Aorta (tissue), 5 donors: ENCODE measurements at regions of chr20 and their contacts with region 1.

Region 1: DNA sequence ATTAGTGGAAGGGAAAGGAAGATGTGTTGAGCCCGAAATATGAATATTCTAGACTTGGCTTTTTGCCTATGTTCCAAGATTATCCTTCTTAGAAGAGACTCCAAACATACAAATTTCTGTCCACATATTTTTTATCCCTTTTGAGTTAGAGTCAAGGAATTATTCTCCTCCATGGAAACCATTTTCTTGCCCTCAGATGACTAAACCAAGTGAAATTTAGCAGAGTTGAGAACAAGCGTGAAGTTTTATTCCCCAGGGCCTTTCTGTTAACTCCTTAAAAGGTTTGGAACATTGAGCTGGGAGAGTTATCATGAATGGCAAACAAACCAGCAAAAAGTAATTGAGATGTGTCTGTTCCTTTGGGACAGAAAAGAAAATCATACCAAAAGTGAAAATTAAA is 286.1 kb upstream of the PLCB4 start:
- DNase-seq: no peak
- ATAC-seq: no peak
- H3K4me3 ChIP-seq: no peak overlapping the region
- H3K27ac ChIP-seq: no peak overlapping the region
- H3K4me1 ChIP-seq: peaks cover 0 to 4% of the 10 kb centered on the region in 2 donors
- H3K27me3 ChIP-seq: no peaks in the 10 kb centered on the region

Region 2: GRCh38 chr20:8722276-8722928 is 60.4 kb before region 1 on chr20:
- intact Hi-C with region 1: no loop called
- DNase-seq: no peak
- ATAC-seq: no peak
- H3K4me3 ChIP-seq: no peak overlapping the region
- H3K27ac ChIP-seq: no peak overlapping the region
- H3K4me1 ChIP-seq: no peaks in the 10 kb centered on the region
- H3K27me3 ChIP-seq: no peaks in the 10 kb centered on the region

Region 3: GRCh38 chr20:8901237-8902025 is 118.6 kb after region 1 on chr20:
- intact Hi-C with region 1: no loop called
- DNase-seq: peak; percentile 55 to 86
- ATAC-seq: peak; percentile 87
- H3K4me3 ChIP-seq: no peak overlapping the region
- H3K27ac ChIP-seq: peak overlapping the region; percentile 87 to 93
- H3K4me1 ChIP-seq: peaks cover 2 to 6% of the 10 kb centered on the region in 2 donors
- H3K27me3 ChIP-seq: no peaks in the 10 kb centered on the region

Region 4: DNA sequence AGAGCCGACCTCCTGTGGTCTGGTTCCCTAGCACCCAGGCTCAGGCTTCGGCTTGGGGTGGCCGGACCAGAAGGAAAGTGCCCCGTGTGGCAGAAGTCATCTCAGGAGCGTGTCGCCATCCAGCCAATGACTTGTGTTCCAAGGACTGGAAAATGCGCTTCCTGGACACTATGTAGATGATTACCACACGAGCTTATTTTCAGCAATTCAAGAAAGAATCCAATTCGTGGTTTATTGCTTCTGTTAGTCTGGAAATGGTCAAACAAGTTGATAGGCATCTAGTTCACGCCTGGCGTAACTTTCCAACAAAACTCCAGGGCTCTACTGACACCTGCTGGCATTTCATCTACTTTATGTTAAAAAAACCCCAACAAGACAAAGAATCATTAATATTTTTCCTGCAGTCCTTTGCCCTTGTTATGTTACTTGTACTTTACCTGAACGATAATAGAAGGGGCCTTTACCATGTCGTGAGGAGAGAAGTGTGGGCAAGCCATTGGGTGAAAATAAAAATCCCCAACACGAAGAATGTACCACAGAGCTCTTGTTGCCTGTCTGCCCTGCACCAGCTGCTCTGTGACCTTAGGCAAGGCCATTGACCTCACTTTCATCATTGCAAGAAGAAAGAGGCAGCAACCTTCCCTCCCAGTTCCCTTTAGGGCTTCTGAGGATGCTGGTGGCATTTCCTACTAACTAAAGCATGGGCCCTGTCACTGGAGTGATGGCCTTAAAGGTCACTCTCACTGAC is 576.9 kb after region 1 on chr20:
- intact Hi-C with region 1: loop called in 1 of 2 experiments (anchors 10 kb)
- DNase-seq: peak; percentile 51 to 72
- ATAC-seq: peak; percentile 80
- H3K4me3 ChIP-seq: no peak overlapping the region
- H3K27ac ChIP-seq: peak overlapping the region in 1 of 2 donors; percentile 58
- H3K4me1 ChIP-seq: peaks cover 0 to 2% of the 10 kb centered on the region in 2 donors
- H3K27me3 ChIP-seq: no peaks in the 10 kb centered on the region

Region 5: DNA sequence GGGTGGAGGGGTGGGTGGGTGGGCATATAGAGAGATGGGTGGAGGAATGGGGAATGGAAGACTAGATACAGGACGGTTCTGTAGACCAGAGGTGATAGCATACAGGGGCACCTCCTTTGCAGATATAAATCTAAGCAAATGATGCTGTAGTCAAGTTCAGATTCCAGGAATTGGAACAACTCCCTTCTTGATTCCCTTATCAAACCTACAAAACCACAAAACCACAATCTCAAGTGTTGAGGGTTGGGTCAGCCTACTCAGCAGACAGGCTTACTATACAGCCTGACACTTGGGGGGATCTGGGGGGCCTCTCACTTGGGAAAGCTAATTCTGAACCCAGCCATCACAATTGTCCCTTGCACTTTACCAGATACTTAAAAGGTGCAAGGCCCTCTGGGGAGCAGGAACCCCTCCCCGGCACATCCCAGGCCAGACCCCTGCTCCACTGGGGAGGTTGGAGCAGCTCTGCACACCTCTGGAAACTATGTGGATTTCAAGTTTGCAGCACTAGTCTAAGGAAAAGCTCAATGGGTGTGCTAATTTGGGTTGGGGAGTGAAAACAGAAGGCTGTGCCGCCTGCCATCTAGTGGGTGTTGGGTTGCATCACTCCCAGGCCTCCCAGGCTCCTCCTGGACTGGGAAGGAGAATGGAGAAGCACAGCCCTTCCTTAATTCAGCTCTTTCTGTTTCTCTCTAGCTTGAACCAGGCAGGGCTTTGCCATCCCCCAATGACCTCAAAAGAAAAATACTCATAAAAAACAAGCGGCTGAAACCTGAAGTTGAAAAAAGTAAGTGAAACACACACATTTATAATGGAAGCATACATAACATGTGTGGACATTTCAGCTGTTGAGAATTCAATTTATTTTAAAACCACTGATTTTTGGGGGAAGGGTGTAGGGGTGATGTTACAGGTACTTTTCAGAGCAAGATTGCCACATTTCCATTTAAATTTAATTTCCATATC is 610.4 kb after region 1 on chr20:
- intact Hi-C with region 1: loop called in 1 of 2 experiments (anchors 5 kb)
- DNase-seq: peak; percentile 81 to 86
- ATAC-seq: peak; percentile 92
- H3K4me3 ChIP-seq: no peak overlapping the region
- H3K27ac ChIP-seq: no peak overlapping the region
- H3K4me1 ChIP-seq: peaks cover 3 to 7% of the 10 kb centered on the region in 2 donors
- H3K27me3 ChIP-seq: no peaks in the 10 kb centered on the region

Region 6: DNA sequence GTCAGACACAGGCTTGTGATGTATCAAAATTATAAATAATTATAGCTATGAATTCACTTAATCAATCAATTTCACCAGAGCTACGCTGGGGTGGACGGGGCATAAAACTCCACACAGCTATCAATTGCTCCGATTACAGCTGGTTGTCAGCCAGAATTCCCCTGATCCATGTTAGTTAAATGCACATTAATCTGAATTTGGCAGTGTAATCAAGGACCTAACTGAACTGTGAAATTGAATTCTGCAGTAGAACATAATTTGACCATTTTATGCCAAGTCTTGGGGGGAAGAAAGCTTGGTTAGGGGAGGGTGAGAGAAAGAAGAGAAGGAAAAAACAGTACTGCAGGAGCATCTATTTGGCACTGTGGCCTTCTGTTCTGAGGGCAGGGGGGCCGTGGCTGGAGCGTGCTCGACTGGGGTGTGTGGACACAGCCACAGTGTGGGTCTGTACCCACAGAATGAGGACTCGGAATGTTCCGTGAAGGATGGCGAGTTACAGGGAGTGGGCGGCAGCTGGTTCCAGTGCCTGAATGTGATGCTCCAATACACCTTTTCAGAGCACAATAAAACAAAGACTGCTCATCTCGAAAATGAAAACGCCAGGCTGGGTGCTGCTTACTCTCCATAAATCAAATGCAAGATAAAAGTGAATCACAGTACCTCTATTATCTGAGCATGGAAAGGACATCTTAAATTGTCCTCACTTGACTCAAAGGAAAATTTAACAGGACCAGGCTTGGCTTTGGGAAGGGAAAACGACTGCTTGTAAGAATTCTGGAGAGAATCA is 790.7 kb after region 1 on chr20:
- intact Hi-C with region 1: no loop called
- DNase-seq: no peak
- ATAC-seq: no peak
- H3K4me3 ChIP-seq: no peak overlapping the region
- H3K27ac ChIP-seq: no peak overlapping the region
- H3K4me1 ChIP-seq: no peaks in the 10 kb centered on the region
- H3K27me3 ChIP-seq: peaks cover 0 to 2% of the 10 kb centered on the region in 2 donors

Region 7: DNA sequence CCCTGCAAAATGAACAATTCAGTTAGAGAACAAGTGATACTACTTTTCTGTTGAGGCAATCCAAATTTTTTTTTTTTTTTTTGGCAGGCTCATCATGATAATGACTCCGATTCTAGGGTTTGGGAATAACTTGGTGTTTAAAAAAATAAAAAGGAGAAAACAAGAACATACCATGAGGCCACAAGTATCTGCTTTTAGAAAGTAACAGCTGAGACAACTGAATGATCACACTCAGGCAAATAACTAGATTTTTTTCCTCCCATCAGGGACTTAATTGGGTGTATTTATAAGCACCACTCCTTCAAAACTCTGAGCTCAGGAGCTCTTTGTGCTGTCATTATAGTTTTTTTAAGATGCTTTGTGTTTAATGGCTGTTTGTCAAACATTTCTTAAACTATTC is 1026.5 kb after region 1 on chr20:
- intact Hi-C with region 1: no loop called
- DNase-seq: no peak
- ATAC-seq: no peak
- H3K4me3 ChIP-seq: no peak overlapping the region
- H3K27ac ChIP-seq: no peak overlapping the region
- H3K4me1 ChIP-seq: no peaks in the 10 kb centered on the region
- H3K27me3 ChIP-seq: no peaks in the 10 kb centered on the region